ENCODE measurements at regions of chr5 and their contacts with region 1.

Region 1: GRCh38 chr5:38809388-38810359 is 36.1 kb upstream of the OSMR start:
- DNase-seq: peak; percentile 76 to 84
- ATAC-seq: peak; percentile 88 to 97 (median 90)
- H3K4me3 ChIP-seq: no peak overlapping the region
- H3K27ac ChIP-seq: no peak overlapping the region
- H3K4me1 ChIP-seq: peaks cover 6% of the 10 kb centered on the region
- H3K27me3 ChIP-seq: no peaks in the 10 kb centered on the region
- CTCF ChIP-seq: peak; percentile 89

Region 2: GRCh38 chr5:38381361-38381760 is 428.3 kb before region 1 on chr5:
- intact Hi-C with region 1: loop called in 1 of 2 experiments (anchors 2 kb)
- DNase-seq: no peak
- ATAC-seq: no peak
- H3K4me3 ChIP-seq: no peak overlapping the region
- H3K27ac ChIP-seq: no peak overlapping the region
- H3K4me1 ChIP-seq: no peaks in the 10 kb centered on the region
- H3K27me3 ChIP-seq: peaks cover 0 to 15% (median 3%) of the 10 kb centered on the region in 3 donors
- CTCF ChIP-seq: no peak

Region 3: DNA sequence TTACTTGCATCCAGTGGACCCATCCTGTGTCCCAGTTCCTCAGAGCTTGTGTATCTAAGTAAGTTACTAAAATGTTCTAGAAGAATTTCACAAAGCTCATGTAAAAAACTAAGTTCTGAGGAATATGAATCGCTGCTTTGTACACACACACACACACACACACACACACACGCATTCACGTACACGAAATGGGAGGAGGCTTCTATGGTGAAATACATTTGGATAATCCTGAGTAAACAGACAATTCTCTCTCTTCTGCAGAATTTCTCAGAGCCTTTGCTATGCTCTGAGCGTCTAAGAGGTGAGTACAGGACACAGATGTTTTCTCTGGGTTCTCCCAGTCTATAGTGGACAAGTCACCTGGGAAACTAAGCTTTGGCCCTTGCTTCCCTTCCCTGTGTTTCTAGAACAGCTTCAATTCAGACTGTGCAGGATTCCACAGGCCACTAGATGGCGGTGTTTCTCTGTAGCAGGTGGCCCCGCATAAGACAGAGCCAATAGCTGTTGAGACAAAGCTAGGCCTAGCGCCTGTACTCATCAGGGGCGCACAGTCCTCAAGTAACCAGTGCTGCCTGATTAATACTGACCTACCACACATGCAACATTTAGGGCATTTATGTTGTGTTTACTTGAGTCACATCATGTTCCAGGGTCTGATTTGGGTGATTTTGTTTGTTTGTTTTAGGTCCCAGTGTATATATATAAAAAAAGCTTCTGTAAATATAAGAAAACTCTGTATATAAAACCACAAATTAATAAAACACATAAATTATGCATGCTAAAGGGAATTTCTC is 368.0 kb before region 1 on chr5:
- intact Hi-C with region 1: loop called in 1 of 2 experiments (anchors 2 kb)
- DNase-seq: peak; percentile 85 to 90
- ATAC-seq: peak; percentile 76 to 90 (median 81)
- H3K4me3 ChIP-seq: no peak overlapping the region
- H3K27ac ChIP-seq: no peak overlapping the region
- H3K4me1 ChIP-seq: peaks cover 7% of the 10 kb centered on the region
- H3K27me3 ChIP-seq: no peaks in the 10 kb centered on the region
- CTCF ChIP-seq: peak; percentile 95

Region 4: DNA sequence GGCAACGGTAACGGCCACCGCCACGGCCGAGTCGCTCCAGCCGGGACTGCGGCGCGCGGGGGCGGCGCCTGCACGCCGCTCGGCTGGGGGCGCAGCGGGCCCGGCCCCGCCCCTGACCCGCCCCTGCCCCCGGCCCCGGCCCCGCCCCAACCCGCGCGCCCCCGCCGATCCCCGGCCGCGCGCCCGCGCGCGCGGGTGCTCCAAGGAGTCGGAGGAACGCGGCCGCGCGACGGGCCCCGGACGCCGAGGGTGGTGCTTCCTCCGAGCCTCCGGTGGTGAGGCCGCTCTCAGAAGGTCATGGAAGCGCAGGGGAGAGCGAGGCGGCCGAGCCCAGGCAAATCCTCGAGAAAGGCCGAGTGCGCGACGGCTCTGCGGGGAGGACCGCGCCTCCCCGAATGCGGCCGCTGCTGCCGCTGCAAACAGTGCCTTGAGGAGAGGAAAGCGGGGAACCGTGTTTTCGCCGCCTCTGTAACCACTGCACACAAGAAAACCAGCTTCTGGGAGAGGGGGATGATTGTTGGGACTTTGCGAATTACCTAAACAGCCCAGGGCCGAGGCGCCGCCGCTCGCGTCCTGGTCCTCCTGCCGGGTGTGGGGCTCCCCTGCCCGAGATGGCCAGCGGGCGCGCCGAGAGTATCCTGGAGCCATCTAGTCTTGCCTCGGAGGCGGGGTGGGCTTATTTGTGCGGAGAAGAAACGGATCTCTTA is 252.9 kb before region 1 on chr5 and contains the start of gene LIFR:
- intact Hi-C with region 1: loop called (anchors 10 kb)
- DNase-seq: peak; percentile 89 to 91
- ATAC-seq: peak; percentile 84 to 91 (median 88)
- H3K4me3 ChIP-seq: peak within 1 kb of the TSS; percentile 93
- H3K27ac ChIP-seq: peak within 1 kb of the TSS; percentile 96
- H3K4me1 ChIP-seq: peaks cover 36% of the 10 kb centered on the region
- H3K27me3 ChIP-seq: no peaks in the 10 kb centered on the region
- CTCF ChIP-seq: no peak
- total RNA-seq, gene LIFR: 28.9 to 74.5 (median 57.1) TPM

Region 5: DNA sequence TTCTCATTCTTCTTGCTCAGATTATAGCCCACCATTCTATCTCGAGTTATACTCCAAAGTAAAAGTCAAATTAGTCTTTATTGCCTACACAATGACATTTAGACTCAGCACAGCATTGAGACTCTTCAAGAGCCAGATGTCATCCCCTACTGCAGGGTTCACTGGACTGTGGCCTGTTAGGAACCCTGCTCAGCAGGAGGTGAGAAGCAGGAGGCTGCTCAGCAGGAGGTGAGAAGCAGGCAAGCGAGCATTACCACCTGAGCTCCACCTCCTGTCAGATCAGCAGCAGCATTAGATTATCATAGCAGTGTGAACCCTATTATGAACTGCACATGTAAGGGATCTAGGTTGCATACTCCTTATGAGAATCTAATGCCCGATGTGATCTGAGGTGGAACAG is 240.5 kb before region 1 on chr5:
- intact Hi-C with region 1: no loop called
- DNase-seq: no peak
- ATAC-seq: no peak
- H3K4me3 ChIP-seq: no peak overlapping the region
- H3K27ac ChIP-seq: no peak overlapping the region
- H3K4me1 ChIP-seq: no peaks in the 10 kb centered on the region
- H3K27me3 ChIP-seq: no peaks in the 10 kb centered on the region
- CTCF ChIP-seq: no peak

Region 6: DNA sequence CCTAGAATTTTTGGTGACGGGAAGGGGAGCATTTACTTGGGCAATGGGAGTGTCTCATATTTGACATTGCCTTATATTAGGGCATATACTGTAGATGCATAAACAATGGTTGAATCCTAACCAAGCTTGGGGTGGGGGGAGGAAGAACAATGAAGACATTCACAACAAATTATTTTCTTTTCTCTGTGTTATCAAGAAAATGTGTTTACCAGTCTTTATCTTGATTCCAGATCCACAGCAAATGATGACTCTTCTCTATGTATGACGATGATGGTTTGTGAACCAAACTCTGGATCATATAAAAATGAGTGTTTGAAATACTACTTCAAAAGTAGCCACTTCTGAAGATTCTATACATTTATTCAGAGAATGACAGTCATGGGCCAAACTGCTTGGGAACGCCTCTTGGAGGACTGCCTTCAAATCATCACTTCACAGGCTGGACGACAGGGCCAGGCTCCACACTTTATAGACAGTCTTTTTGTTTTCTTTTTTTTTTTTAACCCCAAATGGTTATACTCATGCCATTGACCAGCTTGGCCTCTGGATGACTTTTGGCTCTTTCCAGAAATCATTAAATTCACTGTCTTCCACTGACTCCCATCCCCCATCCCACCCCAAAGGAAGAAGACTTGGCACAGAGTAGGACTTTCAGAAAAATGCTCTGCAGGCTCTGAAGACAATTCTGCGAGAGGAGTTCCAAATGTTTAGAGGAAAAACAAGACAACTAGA is 129.4 kb before region 1 on chr5:
- intact Hi-C with region 1: no loop called
- DNase-seq: no peak
- ATAC-seq: no peak
- H3K4me3 ChIP-seq: no peak overlapping the region
- H3K27ac ChIP-seq: no peak overlapping the region
- H3K4me1 ChIP-seq: no peaks in the 10 kb centered on the region
- H3K27me3 ChIP-seq: no peaks in the 10 kb centered on the region
- CTCF ChIP-seq: no peak

Region 7: GRCh38 chr5:38719916-38720315 is 89.8 kb before region 1 on chr5:
- intact Hi-C with region 1: no loop called
- DNase-seq: no peak
- ATAC-seq: peak in 2 of 4 donors; percentile 48 to 62
- H3K4me3 ChIP-seq: no peak overlapping the region
- H3K27ac ChIP-seq: no peak overlapping the region
- H3K4me1 ChIP-seq: no peaks in the 10 kb centered on the region
- H3K27me3 ChIP-seq: no peaks in the 10 kb centered on the region
- CTCF ChIP-seq: no peak

Region 8: GRCh38 chr5:38878391-38879077 is 68.9 kb after region 1 on chr5:
- intact Hi-C with region 1: no loop called
- DNase-seq: no peak
- ATAC-seq: peak in 2 of 4 donors; percentile 40 to 45
- H3K4me3 ChIP-seq: no peak overlapping the region
- H3K27ac ChIP-seq: no peak overlapping the region
- H3K4me1 ChIP-seq: no peaks in the 10 kb centered on the region
- H3K27me3 ChIP-seq: no peaks in the 10 kb centered on the region
- CTCF ChIP-seq: no peak